ENCODE measurements at regions of chr17 and their contacts with region 1.

Region 1: DNA sequence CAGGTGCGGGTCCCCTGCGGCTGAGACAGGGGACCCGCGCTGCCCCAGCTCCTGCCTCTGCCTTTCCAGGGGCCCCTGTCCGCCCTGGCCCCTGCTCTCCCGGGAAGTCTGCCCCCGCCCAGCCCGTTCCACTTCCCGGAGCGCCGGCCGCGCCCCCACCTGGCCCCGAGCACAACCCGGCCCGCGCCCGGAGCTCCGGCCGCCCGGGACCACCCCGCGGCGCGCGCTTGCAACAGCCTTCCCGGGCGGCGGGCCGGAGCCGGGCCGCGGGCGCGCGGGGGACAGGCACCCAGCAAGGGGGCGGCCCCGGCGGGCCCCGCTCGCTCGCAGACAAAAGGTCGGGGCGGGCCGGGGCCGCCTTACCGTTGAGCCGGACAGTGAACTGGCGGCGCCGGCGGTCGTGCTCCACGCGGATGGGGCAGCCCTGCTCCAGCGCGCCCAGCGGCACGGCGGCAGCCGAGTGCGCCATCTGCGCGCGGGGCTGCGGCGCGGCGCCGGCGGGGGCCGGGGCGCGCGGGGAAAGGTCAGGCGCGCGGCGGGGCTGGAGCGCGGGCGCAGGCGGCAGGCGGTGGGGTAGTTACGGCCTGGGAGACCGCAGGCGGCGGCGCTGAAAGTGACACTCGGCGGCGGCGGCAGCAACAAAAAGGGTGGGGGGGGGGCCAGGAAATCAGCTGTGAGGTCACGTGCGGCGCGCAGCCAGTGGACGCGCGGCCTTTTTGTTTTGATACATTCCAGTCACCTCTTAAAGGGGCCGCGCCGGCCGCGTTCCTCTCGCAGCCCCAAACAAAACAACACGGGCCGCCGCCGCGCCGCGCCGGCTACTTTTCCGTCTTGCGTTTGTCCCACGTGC is at the start of gene NATD1:
- DNase-seq: peak; percentile 89
- H3K4me3 ChIP-seq: peak within 1 kb of the TSS; percentile 48
- H3K27ac ChIP-seq: no peak within 1 kb of the TSS
- H3K4me1 ChIP-seq: no peaks in the 10 kb centered on the region
- H3K27me3 ChIP-seq: no peaks in the 10 kb centered on the region
- CTCF ChIP-seq: no peak
- total RNA-seq, gene NATD1: 0.75 and 2.3 TPM in 2 replicates

Region 2: GRCh38 chr17:21177854-21178600 is 75.0 kb before region 1 on chr17:
- CTCF ChIA-PET with region 1: no interaction called
- POLR2A ChIA-PET with region 1: no interaction called
- intact Hi-C with region 1: no loop called
- DNase-seq: no peak
- H3K4me3 ChIP-seq: no peak overlapping the region
- H3K27ac ChIP-seq: no peak overlapping the region
- H3K4me1 ChIP-seq: no peaks in the 10 kb centered on the region
- H3K27me3 ChIP-seq: no peaks in the 10 kb centered on the region
- CTCF ChIP-seq: no peak

Region 3: GRCh38 chr17:21275579-21276263 is 22.7 kb after region 1 on chr17:
- CTCF ChIA-PET with region 1: interaction called, 7 read pairs
- POLR2A ChIA-PET with region 1: no interaction called
- intact Hi-C with region 1: loop called (anchors 2 kb)
- DNase-seq: peak; percentile 92
- H3K4me3 ChIP-seq: peak overlapping the region; percentile 58
- H3K27ac ChIP-seq: peak overlapping the region; percentile 55
- H3K4me1 ChIP-seq: peaks cover 11% of the 10 kb centered on the region
- H3K27me3 ChIP-seq: no peaks in the 10 kb centered on the region
- CTCF ChIP-seq: no peak

Measured in A673 (cell line).